ENCODE measurements at regions of chr14 and their contacts with region 1.

Region 1: GRCh38 chr14:65102441-65103149 is at the start of gene MAX:
- DNase-seq: peak; percentile 96 to 97 (median 96)
- H3K4me3 ChIP-seq: peak within 1 kb of the TSS; percentile 86
- H3K27ac ChIP-seq: peak within 1 kb of the TSS; percentile 37 to 66
- H3K4me1 ChIP-seq: peaks cover 8% of the 10 kb centered on the region
- H3K27me3 ChIP-seq: no peaks in the 10 kb centered on the region
- CTCF ChIP-seq: no peak
- EP300 ChIP-seq: no peak
- POLR2A ChIP-seq: peak; percentile 43
- total RNA-seq, gene MAX: 48.4 to 168 (median 109) TPM

Region 2: GRCh38 chr14:65156568-65157366 is 54.2 kb after region 1 on chr14:
- intact Hi-C with region 1: loop called in 1 of 4 experiments (anchors 5 kb)
- DNase-seq: peak; percentile 45 to 74 (median 57)
- H3K4me3 ChIP-seq: no peak overlapping the region
- H3K27ac ChIP-seq: peak overlapping the region in 1 of 2 donors; percentile 69
- H3K4me1 ChIP-seq: peaks cover 4% of the 10 kb centered on the region
- H3K27me3 ChIP-seq: no peaks in the 10 kb centered on the region
- CTCF ChIP-seq: no peak
- EP300 ChIP-seq: no peak
- POLR2A ChIP-seq: no peak